ENCODE measurements at regions of chr4 and their contacts with region 1.

Region 1: DNA sequence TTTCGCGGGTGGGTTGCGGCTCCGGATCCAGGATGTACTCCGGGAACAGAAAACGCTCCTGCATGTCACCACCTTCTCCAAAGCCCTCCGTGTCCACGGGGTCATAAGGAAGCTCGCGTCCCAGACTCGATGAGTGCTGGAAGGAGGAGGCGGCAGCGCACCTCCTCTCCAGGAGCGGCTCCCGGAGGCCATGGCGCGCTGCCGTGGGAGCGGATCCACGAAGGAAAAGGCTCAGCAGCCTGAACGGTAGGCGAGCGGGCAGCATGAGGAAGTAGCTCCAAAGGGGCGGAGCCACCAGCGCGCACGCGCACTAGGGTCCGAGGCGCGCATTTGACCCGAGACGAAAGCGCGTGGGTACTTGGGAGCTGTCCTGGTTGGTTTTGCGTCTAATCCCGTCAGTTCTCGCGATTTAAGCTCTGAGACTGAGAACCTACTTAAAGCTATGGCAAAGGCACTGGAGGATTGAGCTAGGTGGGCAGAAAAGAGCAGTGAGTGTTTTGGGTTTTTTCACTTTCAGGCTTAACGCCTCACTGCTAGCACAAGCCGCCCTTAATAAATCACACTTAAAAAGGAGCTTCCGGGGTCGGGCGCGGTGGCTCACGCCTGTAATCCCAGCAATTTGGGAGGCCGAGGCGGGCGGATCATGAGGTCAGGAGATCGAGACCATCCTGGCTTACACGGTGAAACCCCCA is at the start of gene NOA1:
- DNase-seq: peak; percentile 99
- ATAC-seq: peak; percentile 78
- H3K4me3 ChIP-seq: peak within 1 kb of the TSS; percentile 97 to 98
- H3K27ac ChIP-seq: peak within 1 kb of the TSS; percentile 84
- H3K4me1 ChIP-seq: peaks cover 7 to 17% of the 10 kb centered on the region in 2 experiments; a peak in 2 of 4 replicates
- H3K27me3 ChIP-seq: no peaks in the 10 kb centered on the region
- CTCF ChIP-seq: no peak
- POLR2A ChIP-seq: peak; percentile 89
- RAD21 ChIP-seq: no peak
- total RNA-seq, gene NOA1: 38.4 TPM

Region 2: GRCh38 chr4:56907489-56908205 is 69.8 kb before region 1 on chr4 and contains the start of gene REST:
- CTCF ChIA-PET with region 1: interaction called, 3 read pairs
- POLR2A ChIA-PET with region 1: interaction called, 8 read pairs
- RAD21 ChIA-PET with region 1: no interaction called
- intact Hi-C with region 1: loop called (anchors 5 kb)
- DNase-seq: no peak
- ATAC-seq: peak; percentile 79
- H3K4me3 ChIP-seq: peak within 1 kb of the TSS; percentile 85 to 94
- H3K27ac ChIP-seq: peak within 1 kb of the TSS; percentile 77
- H3K4me1 ChIP-seq: peaks cover 8 to 14% of the 10 kb centered on the region in 2 experiments
- H3K27me3 ChIP-seq: no peaks in the 10 kb centered on the region
- CTCF ChIP-seq: no peak
- POLR2A ChIP-seq: no peak
- RAD21 ChIP-seq: no peak
- total RNA-seq, gene REST: 42.6 TPM

Region 3: GRCh38 chr4:56959100-56959499 is 18.4 kb before region 1 on chr4:
- CTCF ChIA-PET with region 1: interaction called, 14 read pairs
- POLR2A ChIA-PET with region 1: interaction called, 16 read pairs
- RAD21 ChIA-PET with region 1: no interaction called
- intact Hi-C with region 1: no loop called
- DNase-seq: no peak
- ATAC-seq: no peak
- H3K4me3 ChIP-seq: no peak overlapping the region
- H3K27ac ChIP-seq: no peak overlapping the region
- H3K4me1 ChIP-seq: no peaks in the 10 kb centered on the region
- H3K27me3 ChIP-seq: no peaks in the 10 kb centered on the region
- CTCF ChIP-seq: no peak
- POLR2A ChIP-seq: no peak
- RAD21 ChIP-seq: no peak

Region 4: DNA sequence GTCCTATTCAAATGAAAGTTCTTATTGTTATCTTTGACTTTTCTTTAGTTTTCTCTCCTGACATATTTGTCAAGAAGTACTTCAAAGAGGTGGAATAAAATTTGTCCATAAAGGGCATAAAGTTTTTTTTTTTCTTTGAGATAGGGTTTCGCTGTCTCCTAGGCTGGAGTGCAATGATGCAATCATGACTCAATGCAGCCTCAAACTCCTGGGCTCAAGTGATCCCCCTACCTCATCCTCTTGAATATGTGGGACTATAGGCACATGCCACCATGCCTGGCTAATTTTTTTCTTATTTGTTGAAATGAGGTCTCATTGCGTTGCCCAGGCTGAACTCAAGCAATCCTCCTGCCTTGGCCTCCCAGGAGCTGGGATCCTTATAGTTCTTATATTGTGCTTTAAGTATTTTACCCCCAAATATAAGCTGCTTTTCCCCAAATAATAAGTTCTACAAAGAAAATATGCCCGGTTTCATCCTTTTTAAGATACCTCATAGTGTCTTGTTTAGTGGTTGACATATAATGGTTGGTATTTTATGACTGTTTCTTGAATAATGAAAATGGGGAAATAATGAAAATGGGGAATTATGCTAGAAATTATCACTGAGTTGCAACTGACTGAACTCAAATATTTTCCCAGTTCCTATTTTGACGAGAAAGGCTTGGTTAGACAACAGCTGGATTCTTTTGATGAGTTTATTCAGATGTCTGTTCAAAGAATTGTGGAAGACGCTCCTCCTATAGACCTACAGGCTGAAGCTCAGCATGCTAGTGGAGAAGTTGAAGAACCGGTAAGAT is 12.8 kb after region 1 on chr4:
- CTCF ChIA-PET with region 1: no interaction called
- POLR2A ChIA-PET with region 1: interaction called, 14 read pairs
- RAD21 ChIA-PET with region 1: no interaction called
- intact Hi-C with region 1: no loop called
- DNase-seq: no peak
- ATAC-seq: no peak
- H3K4me3 ChIP-seq: no peak overlapping the region
- H3K27ac ChIP-seq: no peak overlapping the region
- H3K4me1 ChIP-seq: no peaks in the 10 kb centered on the region
- H3K27me3 ChIP-seq: no peaks in the 10 kb centered on the region
- CTCF ChIP-seq: no peak
- POLR2A ChIP-seq: no peak
- RAD21 ChIP-seq: no peak